ENCODE measurements at regions of chr15 and their contacts with region 1.

Region 1: DNA sequence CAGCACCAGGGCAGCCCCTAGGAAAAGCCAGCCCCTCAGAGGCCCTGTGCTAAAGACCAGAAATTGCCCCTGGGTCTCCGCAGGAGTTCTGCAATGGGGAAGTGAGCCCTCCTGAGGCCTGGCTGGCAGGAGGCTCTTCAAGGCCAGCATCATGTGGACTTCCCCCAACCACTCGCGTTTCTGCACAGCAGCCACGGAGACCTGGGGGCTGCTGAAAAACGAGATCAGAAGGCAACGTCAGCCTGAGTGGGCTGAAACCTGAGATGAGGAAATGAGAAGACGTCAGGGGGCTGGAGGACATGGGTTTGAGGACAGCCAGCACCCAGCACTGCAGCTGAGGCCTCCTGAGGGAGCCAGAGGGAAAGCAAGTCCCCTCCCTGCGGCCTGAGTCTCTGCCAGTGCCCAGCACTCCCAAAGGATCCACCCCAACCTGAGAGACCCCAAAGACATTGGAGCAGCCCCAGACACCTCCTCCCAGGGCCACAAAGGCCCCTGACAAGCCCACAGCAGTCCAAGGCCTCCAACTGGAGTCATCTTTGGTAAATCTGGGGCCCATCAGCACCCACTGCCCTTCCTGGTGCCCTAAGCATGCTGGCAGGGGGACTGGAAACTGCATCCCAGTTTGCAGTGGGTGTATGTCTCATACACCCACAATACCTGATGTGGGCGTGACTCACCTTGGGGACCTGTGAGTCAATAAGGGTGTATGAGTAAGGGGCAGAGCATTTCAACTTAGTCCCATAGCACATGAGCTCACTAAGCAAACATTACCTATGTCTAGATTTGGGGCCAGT is 29.2 kb upstream of the CYP11A1 start:
- DNase-seq: peak; percentile 95
- ATAC-seq: peak; percentile 73
- H3K4me3 ChIP-seq: peak overlapping the region in 2 of 5 experiments; percentile 1 to 49
- H3K4me3 Mint-ChIP-seq: peak overlapping the region; percentile 78
- H3K27ac ChIP-seq: peak overlapping the region; percentile 96 to 98
- H3K27ac Mint-ChIP-seq: peak overlapping the region; percentile 97
- H3K4me1 ChIP-seq: peaks cover 95 to 100% of the 10 kb centered on the region in 2 donors
- H3K4me1 Mint-ChIP-seq: peaks cover 98% of the 10 kb centered on the region
- H3K27me3 ChIP-seq: no peaks in the 10 kb centered on the region
- H3K27me3 Mint-ChIP-seq: no peaks in the 10 kb centered on the region
- CTCF ChIP-seq: peak; percentile 10

Region 2: GRCh38 chr15:73972984-73973682 is 423.5 kb before region 1 on chr15:
- CTCF ChIA-PET with region 1: no interaction called
- POLR2A ChIA-PET with region 1: no interaction called
- intact Hi-C with region 1: no loop called
- DNase-seq: peak; percentile 86
- ATAC-seq: peak; percentile 81
- H3K4me3 ChIP-seq: peak overlapping the region in 4 of 5 experiments; percentile 6 to 55 (median 26)
- H3K4me3 Mint-ChIP-seq: peak overlapping the region; percentile 42
- H3K27ac ChIP-seq: no peak overlapping the region
- H3K27ac Mint-ChIP-seq: no peak overlapping the region
- H3K4me1 ChIP-seq: peaks cover 16 to 17% of the 10 kb centered on the region in 2 donors
- H3K4me1 Mint-ChIP-seq: peaks cover 20% of the 10 kb centered on the region
- H3K27me3 ChIP-seq: peaks cover 0 to 20% (median 13%) of the 10 kb centered on the region in 4 experiments
- H3K27me3 Mint-ChIP-seq: peaks cover 23% of the 10 kb centered on the region
- CTCF ChIP-seq: peak; percentile 82

Region 3: DNA sequence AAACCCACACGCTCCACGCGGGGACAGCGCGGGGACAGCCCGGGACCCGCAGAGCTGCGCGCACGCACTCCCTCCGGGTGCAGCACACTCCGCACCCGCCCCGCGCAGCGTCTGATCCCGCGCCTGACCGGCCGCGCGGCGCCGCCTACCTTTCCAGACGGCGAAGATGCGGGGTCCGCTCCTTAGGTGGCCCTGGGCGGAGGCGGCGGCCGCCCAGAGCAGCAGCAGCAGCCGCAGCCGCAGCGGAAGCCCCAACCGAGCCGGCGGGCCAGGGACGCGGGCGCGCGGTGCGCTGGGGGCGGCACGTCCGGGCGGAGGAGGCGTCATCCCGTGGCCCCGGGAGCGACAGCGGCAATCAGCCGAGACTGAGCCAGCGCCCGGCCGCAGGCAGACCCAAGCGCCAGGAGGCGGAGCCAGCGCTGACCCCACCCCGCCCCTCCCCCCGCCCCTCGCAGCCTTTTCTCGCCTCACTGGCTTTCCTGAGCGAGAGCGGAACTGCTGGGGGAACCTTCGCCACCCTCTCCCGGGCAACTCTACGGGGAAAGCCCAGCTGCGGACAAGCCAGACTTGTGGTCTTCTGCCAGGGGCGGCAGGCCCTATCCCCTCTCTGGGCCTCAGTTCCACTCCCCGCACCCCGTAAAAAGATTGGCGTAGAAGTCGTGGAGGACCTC is 37.1 kb after region 1 on chr15 and contains the start of gene SEMA7A:
- CTCF ChIA-PET with region 1: interaction called, 15 read pairs
- POLR2A ChIA-PET with region 1: interaction called, 12 read pairs
- intact Hi-C with region 1: loop called (anchors 1 kb)
- DNase-seq: peak; percentile 92
- ATAC-seq: peak; percentile 80
- H3K4me3 ChIP-seq: peak within 1 kb of the TSS; percentile 60 to 89 (median 82)
- H3K4me3 Mint-ChIP-seq: peak within 1 kb of the TSS; percentile 96
- H3K27ac ChIP-seq: peak within 1 kb of the TSS; percentile 75 to 88
- H3K27ac Mint-ChIP-seq: peak within 1 kb of the TSS; percentile 92
- H3K4me1 ChIP-seq: peaks cover 57 to 69% of the 10 kb centered on the region in 2 donors
- H3K4me1 Mint-ChIP-seq: peaks cover 74% of the 10 kb centered on the region
- H3K27me3 ChIP-seq: no peaks in the 10 kb centered on the region
- H3K27me3 Mint-ChIP-seq: no peaks in the 10 kb centered on the region
- CTCF ChIP-seq: no peak
- total RNA-seq, gene SEMA7A: 39.0 and 44.2 TPM in 2 replicates

Region 4: GRCh38 chr15:74781431-74782258 is 385.0 kb after region 1 on chr15 and contains the start of gene CSK:
- CTCF ChIA-PET with region 1: no interaction called
- POLR2A ChIA-PET with region 1: interaction called, 4 read pairs
- intact Hi-C with region 1: loop called (anchors 2 kb)
- DNase-seq: peak; percentile 91
- ATAC-seq: peak; percentile 53
- H3K4me3 ChIP-seq: peak within 1 kb of the TSS; percentile 86 to 99 (median 93)
- H3K4me3 Mint-ChIP-seq: peak within 1 kb of the TSS; percentile 93
- H3K27ac ChIP-seq: peak within 1 kb of the TSS; percentile 91 to 99
- H3K27ac Mint-ChIP-seq: peak within 1 kb of the TSS; percentile 98
- H3K4me1 ChIP-seq: peaks cover 67 to 84% of the 10 kb centered on the region in 2 donors
- H3K4me1 Mint-ChIP-seq: peaks cover 85% of the 10 kb centered on the region
- H3K27me3 ChIP-seq: no peaks in the 10 kb centered on the region
- H3K27me3 Mint-ChIP-seq: no peaks in the 10 kb centered on the region
- CTCF ChIP-seq: peak; percentile 59
- total RNA-seq, gene CSK: 325 and 343 TPM in 2 replicates